Activated CD4-positive, alpha-beta T cell treated with anti-CD3 and anti-CD28 coated beads for 36 hours (primary cell): ENCODE measurements at regions of chr21 and their contacts with region 1.

Region 1: DNA sequence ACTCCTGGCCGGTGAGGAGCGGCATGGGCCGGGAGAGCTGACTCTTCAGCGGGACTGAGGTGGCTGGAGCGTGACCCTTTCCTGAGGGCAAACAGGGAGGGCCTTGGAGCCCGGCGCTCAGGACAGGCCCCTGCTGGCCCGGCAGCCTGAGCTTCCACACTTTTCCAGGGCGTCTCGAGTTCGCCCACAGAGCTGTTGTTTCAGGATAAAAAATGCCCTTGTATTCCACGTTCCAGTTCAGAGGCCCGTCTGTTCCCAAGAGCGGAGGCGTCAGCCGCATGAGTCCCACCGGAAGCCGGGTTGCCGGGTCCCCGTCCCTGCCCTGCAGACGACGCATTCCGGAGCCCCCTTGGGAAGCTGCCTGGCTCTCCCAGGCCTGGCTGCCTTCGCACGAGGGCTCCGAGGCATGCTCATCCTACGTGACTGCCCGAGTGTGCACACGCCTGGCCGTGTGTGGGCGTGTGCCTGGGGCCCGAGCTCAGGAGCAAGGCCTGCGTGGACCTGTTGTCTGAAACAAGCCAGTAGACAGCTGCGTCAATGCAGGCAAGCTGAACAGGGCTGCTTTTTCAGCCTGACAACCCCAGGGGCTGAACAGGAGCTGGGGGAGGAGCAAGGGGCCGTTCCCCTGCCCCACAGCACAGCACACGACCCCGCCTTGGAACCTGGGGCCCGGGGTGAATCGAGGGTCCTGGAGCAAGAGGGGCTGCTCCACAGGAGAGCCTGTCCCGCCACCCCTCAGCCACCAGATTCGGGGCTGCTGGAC is 125.9 kb downstream of the SIK1 start:
- DNase-seq: no peak
- ATAC-seq: no peak
- H3K4me3 Mint-ChIP-seq: no peak overlapping the region
- H3K27ac Mint-ChIP-seq: no peak overlapping the region
- H3K4me1 Mint-ChIP-seq: no peaks in the 10 kb centered on the region
- H3K27me3 Mint-ChIP-seq: no peaks in the 10 kb centered on the region

Region 2: DNA sequence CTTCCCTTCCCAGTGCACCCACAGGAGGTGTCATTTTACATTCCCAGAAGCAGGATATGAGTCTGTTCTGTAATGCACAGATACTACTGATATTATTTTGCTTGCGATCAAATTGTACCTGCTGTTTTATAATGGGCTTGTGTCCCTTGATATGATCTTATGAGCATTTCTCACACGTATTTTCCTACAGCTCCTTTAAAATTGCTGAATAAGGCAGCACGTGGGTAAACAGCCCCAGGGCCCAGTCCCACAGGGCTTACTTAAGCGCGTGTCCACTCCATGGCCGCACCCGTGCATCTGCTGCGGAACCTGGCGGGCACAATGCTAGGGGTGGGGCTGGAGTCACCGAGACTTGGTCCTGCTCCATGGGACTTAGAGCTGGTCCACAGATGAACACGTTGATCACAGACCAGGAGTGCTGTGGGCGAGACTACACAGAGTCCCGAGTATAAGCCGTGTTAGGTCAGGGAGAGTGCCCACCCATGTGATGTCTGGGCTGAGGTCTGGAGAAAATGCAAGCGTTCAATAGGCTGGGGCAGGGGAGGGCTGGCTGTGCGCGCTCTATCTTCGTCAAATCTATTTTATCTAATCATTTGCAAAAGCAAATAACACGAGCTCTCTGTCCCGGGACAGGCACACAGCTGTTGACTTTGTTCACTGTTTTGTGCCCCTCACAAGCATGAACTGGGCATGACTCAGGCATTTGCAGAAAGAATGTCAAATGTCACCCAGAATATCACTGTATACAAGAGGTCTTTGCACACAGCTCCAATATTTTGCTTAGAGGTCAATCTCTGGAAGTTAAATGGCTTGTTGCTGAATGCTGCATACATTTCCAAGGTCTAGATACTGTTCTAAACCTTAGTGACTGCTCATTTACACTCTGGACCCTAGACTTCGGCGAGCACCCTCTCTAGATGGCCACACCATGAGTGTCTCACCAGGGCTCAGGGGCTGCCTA is 13.0 kb before region 1 on chr21:
- CTCF ChIA-PET with region 1: no interaction called
- POLR2A ChIA-PET with region 1: no interaction called
- intact Hi-C with region 1: loop called in 1 of 2 experiments (anchors 2 kb)
- DNase-seq: no peak
- ATAC-seq: no peak
- H3K4me3 Mint-ChIP-seq: no peak overlapping the region
- H3K27ac Mint-ChIP-seq: no peak overlapping the region
- H3K4me1 Mint-ChIP-seq: peaks cover 5% of the 10 kb centered on the region
- H3K27me3 Mint-ChIP-seq: no peaks in the 10 kb centered on the region

Region 3: DNA sequence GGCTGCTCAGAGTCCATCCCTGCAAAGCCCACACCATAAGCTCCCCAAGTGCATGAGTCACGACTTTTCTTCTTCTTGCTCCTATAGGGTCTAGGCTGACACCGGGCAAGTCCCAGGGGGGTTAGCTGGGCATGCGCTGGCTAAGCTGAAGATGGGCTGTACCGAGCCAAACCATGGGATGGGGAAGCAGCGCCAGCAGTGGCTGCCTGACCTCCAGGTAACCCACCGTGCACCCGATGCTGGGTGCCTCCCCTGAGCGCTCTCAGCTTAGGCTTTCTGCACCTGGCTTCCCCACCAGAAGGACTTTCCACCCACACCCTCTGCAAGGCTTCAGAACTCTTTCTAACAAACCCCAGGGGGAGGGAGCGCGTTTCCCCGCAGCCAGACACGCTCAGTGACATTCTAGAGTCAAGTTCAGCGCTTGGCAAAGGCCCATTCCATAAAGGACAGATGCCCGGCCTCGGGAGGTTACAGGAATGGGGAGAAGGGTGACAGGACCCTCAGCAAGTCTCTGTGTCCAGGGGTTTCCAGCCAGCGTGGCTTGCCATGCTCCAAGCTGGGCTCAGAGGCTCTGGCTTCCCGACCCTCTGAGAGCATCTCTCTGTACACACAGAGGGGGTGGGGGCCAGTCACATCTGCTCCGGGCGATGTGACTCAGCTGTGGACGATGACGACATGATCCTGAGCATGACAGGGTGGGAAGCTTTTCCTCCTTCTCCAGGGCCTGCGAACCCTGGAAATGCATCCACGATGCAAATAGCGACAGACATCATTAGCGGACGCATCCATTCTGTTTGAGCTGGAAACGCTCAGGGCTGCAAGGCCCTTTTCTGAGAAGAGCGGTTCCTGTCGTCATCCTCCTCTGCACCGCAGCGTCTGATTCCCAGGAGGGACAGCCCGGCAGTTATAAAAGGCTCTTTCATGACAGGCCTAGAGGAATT is 18.1 kb after region 1 on chr21:
- CTCF ChIA-PET with region 1: no interaction called
- POLR2A ChIA-PET with region 1: no interaction called
- intact Hi-C with region 1: no loop called
- DNase-seq: no peak
- ATAC-seq: no peak
- H3K4me3 Mint-ChIP-seq: no peak overlapping the region
- H3K27ac Mint-ChIP-seq: no peak overlapping the region
- H3K4me1 Mint-ChIP-seq: no peaks in the 10 kb centered on the region
- H3K27me3 Mint-ChIP-seq: peaks cover 7% of the 10 kb centered on the region

Region 4: DNA sequence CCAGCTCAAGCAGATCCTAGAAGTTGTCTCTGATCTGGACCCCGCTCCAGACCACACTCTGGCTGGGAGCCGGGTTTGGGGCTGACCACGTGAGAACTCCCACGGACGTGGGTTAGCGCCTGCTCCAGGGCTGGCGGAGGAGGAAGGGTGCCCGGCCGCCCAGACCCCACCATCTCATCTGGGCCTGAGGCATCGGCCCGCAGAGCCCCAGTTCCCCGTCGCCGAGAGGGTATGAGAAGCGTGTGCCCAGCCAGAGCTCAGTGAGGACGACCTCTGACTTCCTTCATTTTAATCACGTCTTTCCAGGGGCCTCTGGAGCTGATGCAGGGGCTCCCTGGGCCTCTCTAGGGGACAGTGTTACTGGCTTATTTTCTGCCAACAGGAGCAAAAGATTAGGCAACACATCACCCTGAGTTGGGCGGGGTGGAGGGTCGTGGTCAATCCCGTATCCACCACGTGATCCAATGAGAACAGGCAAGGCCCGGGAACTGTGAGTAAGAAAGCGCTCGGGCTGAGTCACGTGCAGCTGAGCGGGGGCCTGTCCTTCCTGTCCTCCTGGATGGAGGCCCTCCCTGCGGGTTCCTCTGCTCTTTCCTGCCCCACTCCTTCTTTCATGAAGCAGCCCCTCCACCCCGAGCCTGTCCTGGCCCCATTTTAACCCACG is 44.8 kb after region 1 on chr21:
- CTCF ChIA-PET with region 1: no interaction called
- POLR2A ChIA-PET with region 1: no interaction called
- intact Hi-C with region 1: loop called in 1 of 2 experiments (anchors 5 kb)
- DNase-seq: peak; percentile 73
- ATAC-seq: peak; percentile 87
- H3K4me3 Mint-ChIP-seq: no peak overlapping the region
- H3K27ac Mint-ChIP-seq: no peak overlapping the region
- H3K4me1 Mint-ChIP-seq: peaks cover 3% of the 10 kb centered on the region
- H3K27me3 Mint-ChIP-seq: no peaks in the 10 kb centered on the region

Region 5: DNA sequence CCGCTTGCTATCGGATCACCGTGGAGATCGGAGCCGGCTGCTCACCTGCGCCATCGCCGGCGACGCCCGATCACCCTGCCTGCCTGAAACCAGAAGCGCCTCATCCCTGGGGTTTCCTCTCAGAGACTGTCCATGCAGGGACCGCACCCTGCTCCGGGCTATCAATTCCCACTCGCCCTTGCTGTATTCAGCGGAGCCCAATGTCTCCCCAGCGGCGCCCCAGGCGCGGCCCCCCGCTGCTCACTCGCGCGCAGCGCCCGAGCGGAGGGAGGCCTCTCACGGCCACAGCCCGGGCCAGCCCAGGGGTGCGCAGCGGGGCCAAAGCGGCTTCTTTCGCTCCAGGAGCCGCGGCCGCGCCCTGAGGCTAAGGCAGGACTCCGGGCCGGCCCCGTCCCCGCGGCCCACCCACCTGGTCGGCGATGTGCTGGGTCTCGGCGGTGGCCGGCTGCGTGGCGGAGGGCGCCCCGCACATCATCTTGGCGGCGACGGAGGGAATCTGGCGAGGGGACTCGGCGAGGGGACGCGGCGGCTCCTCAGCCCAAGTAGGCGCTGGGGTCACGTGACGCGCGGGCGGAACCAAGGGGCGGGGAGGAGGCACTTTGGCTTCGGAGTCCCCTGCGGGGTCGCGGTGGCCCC is 474.9 kb after region 1 on chr21 and contains the start of gene CSTB:
- CTCF ChIA-PET with region 1: no interaction called
- POLR2A ChIA-PET with region 1: no interaction called
- intact Hi-C with region 1: no loop called
- DNase-seq: peak; percentile 90
- ATAC-seq: peak; percentile 72
- H3K4me3 Mint-ChIP-seq: peak within 1 kb of the TSS; percentile 88
- H3K27ac Mint-ChIP-seq: peak within 1 kb of the TSS; percentile 74
- H3K4me1 Mint-ChIP-seq: peaks cover 40% of the 10 kb centered on the region
- H3K27me3 Mint-ChIP-seq: no peaks in the 10 kb centered on the region
- total RNA-seq, gene CSTB: 29.9 to 30.9 TPM